ENCODE measurements at regions of chr1 and their contacts with region 1.

Region 1: DNA sequence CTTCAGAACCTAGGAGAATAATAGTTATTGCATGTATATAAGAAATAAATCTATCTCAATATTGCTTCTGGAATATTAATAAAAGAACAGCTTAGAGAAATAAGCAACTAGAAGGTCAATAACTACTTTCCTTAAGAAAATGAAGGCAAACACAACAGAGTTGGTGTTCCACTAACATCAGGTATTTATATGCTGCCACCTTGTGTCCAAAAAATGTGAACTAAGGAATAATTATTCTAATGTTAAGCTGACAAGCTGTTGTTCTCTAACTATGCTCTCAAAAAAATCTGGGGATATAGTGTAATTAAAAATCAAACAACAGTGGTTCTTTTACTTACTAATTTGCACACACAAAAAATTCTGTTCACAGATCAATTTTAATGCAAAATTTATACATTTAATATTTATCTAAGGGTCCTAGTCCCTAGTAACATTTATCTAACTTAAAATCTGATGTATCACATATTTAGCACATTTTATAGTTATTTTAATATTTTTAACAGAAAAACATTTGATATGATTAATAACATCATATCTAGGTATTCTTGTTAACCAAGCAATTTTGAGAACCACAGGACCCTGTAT is 39.6 kb downstream of the UCHL5 start:
- DNase-seq: no peak
- ATAC-seq: peak; percentile 23 to 64
- H3K4me3 ChIP-seq: no peak overlapping the region
- H3K27ac ChIP-seq: no peak overlapping the region
- H3K4me1 ChIP-seq: no peaks in the 10 kb centered on the region
- H3K27me3 ChIP-seq: no peaks in the 10 kb centered on the region

Region 2: GRCh38 chr1:192808518-192809306 is 210.8 kb before region 1 on chr1 and contains the start of gene RGS2:
- intact Hi-C with region 1: loop called (anchors 5 to 10 kb)
- DNase-seq: peak; percentile 93 to 97 (median 97)
- ATAC-seq: peak; percentile 99
- H3K4me3 ChIP-seq: peak within 1 kb of the TSS; percentile 87
- H3K27ac ChIP-seq: peak within 1 kb of the TSS; percentile 93
- H3K4me1 ChIP-seq: no peaks in the 10 kb centered on the region
- H3K27me3 ChIP-seq: no peaks in the 10 kb centered on the region
- total RNA-seq, gene RGS2: 24.0 to 106 (median 38.0) TPM

Measured in right cardiac atrium (tissue), 5 donors.